Activated CD4-positive, alpha-beta memory T cell treated with anti-CD3 and anti-CD28 coated beads for 36 hours (primary cell): ENCODE measurements at regions of chr12 and their contacts with region 1.

Region 1: DNA sequence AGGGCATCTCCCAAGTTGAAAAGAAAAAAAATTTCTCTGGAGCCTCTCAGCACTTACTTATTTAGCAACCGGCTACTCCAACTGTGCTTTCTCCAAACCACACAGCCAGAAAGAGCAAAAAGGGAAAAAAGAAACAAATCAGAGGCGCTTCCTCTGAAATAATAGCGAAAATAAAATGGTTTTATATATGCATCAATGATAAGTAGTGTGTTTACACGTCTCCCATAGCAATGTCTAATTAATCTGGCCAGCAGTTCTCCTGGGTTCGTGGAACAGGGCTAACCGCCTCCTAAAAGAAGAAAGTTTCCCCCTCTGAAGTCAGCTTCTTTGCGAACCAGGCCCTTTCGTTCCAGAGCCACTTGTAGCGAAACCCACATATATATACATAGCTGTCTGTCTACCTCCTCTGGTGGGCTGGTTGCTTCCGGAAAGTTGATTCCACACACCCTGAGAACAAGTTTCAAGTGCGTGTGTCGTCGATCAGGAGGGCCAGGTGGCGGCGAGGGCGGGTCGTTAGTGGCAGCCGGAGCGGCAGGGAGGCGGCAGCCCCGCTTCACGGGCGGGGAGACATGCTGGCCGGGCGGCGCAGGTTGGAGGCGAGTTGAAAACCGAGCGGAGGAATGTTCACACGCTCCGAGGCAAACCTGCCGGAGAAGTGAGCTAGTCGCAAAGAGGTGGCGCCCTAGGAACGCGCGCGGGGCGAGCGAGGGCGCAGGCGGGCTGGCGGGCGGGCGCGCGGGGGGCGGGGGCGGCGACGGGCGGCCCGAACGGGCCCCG is 2.7 kb downstream of the PTHLH start:
- DNase-seq: peak; percentile 70
- H3K4me3 Mint-ChIP-seq: peak overlapping the region; percentile 75
- H3K27ac Mint-ChIP-seq: no peak overlapping the region
- H3K4me1 Mint-ChIP-seq: peaks cover 28% of the 10 kb centered on the region
- H3K27me3 Mint-ChIP-seq: peaks cover 78% of the 10 kb centered on the region

Region 2: GRCh38 chr12:28065889-28066630 is 96.2 kb after region 1 on chr12:
- CTCF ChIA-PET with region 1: no interaction called
- POLR2A ChIA-PET with region 1: no interaction called
- intact Hi-C with region 1: loop called (anchors 5 kb)
- DNase-seq: no peak
- H3K4me3 Mint-ChIP-seq: no peak overlapping the region
- H3K27ac Mint-ChIP-seq: no peak overlapping the region
- H3K4me1 Mint-ChIP-seq: peaks cover 11% of the 10 kb centered on the region
- H3K27me3 Mint-ChIP-seq: peaks cover 3% of the 10 kb centered on the region

Region 3: DNA sequence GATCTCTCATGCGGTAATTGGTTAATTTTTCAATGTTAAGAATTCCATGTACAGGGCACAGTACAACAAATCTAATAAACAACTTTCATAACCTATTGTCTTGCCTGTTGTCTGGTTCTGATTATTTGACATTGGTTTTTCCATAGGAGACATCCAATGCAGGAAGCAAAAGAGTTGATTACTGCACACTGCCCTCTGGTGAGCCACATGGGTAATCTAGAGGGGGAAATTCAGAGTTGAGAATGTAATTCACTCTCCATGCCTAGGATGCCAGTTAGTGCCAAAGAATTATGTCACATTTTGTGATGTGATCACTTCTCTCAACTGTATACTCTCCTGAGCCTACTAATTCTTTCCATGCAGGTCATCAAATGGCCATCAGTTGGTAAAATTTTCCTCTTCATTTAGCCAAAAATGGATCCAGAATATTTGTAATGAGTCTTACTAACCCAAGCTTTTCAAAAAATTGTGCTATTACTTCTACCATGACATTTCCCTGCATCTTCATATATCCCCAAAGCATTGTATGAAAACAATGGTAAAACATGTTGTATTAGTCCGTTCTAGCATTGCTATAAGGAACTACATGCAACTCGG is 202.7 kb after region 1 on chr12:
- CTCF ChIA-PET with region 1: interaction called, 3 read pairs
- POLR2A ChIA-PET with region 1: no interaction called
- intact Hi-C with region 1: loop called (anchors 10 kb)
- DNase-seq: no peak
- H3K4me3 Mint-ChIP-seq: no peak overlapping the region
- H3K27ac Mint-ChIP-seq: no peak overlapping the region
- H3K4me1 Mint-ChIP-seq: peaks cover 6% of the 10 kb centered on the region
- H3K27me3 Mint-ChIP-seq: no peaks in the 10 kb centered on the region